B cell (primary cell): ENCODE measurements at regions of chr19 and their contacts with region 1.

Region 1: DNA sequence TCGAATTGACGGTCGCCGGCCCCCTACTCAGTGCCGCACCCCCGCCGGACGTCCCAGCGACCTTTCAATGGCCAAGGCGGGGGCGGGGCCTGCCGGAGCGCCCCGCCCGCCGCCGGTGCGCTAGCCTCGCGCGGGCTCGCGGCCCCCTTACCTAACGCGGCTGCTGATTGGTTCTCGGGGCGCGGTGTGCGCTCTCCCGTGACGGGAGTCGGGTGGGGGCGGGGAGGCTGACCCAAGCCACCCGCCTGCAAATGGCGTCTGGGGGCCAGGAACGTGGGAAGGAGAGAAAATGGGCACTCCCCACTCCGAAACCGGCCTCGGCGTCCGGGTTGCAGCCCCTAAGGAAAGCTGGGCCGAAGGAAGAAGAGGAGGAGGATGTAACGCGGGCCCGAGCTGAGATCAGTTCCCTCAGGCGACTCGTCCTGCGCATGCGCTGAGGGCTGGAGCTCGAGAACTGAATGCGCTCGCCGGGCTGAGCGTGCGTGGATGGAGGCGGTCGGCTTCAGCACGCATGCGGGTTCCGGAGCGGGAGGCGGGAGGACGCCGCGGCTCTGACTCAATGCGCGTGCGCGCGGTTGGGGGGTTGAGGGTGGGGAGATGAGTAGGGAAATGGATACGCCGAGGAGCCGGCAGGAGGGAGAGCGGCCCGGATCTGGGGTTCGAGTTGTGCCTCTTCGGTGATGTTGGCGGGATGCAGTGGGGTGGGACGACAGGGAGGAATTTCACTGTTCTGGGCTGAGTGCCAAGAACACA is at the start of gene SMG9:
- DNase-seq: peak; percentile 99
- ATAC-seq: peak; percentile 81
- H3K4me3 ChIP-seq: peak within 1 kb of the TSS; percentile 63 to 88 (median 84)
- H3K4me3 Mint-ChIP-seq: peak within 1 kb of the TSS; percentile 99
- H3K27ac ChIP-seq: peak within 1 kb of the TSS; percentile 93 to 98
- H3K27ac Mint-ChIP-seq: peak within 1 kb of the TSS; percentile 100
- H3K4me1 ChIP-seq: peaks cover 27 to 58% of the 10 kb centered on the region in 2 donors
- H3K4me1 Mint-ChIP-seq: peaks cover 71% of the 10 kb centered on the region
- H3K27me3 ChIP-seq: no peaks in the 10 kb centered on the region
- H3K27me3 Mint-ChIP-seq: no peaks in the 10 kb centered on the region
- CTCF ChIP-seq: no peak
- total RNA-seq, gene SMG9: 87.5 and 89.9 TPM in 2 replicates

Region 2: DNA sequence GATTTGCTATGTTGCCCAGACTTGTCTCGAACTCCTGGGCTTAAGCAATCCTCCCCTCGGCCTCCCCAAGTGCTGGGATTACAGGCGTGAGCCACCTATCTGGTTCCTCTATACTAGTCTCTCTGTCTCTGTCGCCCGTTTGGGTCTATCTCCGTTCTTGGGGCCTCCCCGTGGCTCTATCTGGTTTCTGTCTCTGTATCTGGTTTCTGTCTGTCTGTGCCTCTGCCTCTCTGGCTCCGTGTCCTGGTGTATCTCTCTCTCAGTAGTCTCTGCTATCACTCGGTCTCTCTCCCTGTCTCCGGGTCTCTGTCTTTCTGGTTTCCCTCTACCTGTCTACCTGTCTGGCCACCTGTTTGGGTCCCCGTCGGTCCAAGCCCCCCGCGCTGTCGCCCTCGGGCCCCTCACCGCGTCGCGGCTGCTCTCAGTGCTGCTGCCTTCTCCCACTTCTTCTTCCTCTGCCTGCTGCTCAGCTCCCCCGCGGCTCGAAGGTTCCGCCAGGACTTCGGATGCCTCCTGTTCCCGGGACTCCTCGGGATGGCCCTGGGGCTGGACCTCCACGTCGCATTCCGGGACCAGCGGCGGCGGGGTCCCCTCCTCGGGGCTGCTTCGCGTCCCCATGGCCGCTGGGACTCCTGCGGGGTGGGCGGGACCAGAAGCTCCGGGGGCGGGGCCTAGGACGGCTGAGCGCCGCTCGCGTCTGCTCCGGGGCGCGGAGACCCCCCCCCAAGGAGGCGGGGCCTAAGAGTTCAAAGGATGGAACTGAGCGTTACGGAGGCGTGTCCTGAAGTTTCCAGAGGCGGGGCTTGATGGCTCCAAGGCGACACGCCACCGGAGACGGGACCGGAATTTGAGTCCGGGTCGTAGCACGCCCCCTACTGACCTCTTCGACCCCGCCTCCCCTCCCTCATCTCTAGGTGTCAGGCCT is 250.9 kb before region 1 on chr19:
- CTCF ChIA-PET with region 1: no interaction called
- POLR2A ChIA-PET with region 1: no interaction called
- intact Hi-C with region 1: loop called (anchors 1 kb)
- DNase-seq: peak; percentile 97
- ATAC-seq: peak; percentile 95
- H3K4me3 ChIP-seq: peak overlapping the region; percentile 65 to 97 (median 76)
- H3K4me3 Mint-ChIP-seq: peak overlapping the region; percentile 95
- H3K27ac ChIP-seq: peak overlapping the region; percentile 80 to 82
- H3K27ac Mint-ChIP-seq: peak overlapping the region; percentile 98
- H3K4me1 ChIP-seq: peaks cover 12 to 22% of the 10 kb centered on the region in 2 donors
- H3K4me1 Mint-ChIP-seq: peaks cover 23% of the 10 kb centered on the region
- H3K27me3 ChIP-seq: no peaks in the 10 kb centered on the region
- H3K27me3 Mint-ChIP-seq: no peaks in the 10 kb centered on the region
- CTCF ChIP-seq: no peak

Region 3: DNA sequence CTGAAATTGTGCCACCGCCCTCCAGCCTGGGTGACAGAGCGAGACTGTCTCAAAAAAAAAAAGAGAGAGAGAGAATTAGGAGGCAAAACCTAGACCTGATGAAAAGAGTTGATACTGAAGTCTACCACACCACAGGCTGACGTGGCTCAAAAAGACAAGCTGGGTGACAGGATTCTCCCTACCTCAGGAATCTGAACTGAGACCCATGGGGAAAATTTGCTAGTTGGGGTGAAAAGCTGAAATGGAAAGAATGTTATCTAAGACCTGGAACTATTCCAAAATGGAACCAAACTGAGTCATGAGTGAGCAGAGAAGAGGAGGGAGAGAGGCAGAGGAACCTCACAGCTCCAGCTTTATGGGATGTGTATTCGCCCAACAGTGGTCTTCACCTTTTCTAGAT is 11.7 kb before region 1 on chr19:
- CTCF ChIA-PET with region 1: interaction called, 61 read pairs
- POLR2A ChIA-PET with region 1: interaction called, 9 read pairs
- intact Hi-C with region 1: no loop called
- DNase-seq: no peak
- ATAC-seq: no peak
- H3K4me3 ChIP-seq: no peak overlapping the region
- H3K4me3 Mint-ChIP-seq: no peak overlapping the region
- H3K27ac ChIP-seq: no peak overlapping the region
- H3K27ac Mint-ChIP-seq: no peak overlapping the region
- H3K4me1 ChIP-seq: peaks cover 9 to 20% of the 10 kb centered on the region in 2 donors
- H3K4me1 Mint-ChIP-seq: peaks cover 21% of the 10 kb centered on the region
- H3K27me3 ChIP-seq: no peaks in the 10 kb centered on the region
- H3K27me3 Mint-ChIP-seq: no peaks in the 10 kb centered on the region
- CTCF ChIP-seq: no peak

Region 4: DNA sequence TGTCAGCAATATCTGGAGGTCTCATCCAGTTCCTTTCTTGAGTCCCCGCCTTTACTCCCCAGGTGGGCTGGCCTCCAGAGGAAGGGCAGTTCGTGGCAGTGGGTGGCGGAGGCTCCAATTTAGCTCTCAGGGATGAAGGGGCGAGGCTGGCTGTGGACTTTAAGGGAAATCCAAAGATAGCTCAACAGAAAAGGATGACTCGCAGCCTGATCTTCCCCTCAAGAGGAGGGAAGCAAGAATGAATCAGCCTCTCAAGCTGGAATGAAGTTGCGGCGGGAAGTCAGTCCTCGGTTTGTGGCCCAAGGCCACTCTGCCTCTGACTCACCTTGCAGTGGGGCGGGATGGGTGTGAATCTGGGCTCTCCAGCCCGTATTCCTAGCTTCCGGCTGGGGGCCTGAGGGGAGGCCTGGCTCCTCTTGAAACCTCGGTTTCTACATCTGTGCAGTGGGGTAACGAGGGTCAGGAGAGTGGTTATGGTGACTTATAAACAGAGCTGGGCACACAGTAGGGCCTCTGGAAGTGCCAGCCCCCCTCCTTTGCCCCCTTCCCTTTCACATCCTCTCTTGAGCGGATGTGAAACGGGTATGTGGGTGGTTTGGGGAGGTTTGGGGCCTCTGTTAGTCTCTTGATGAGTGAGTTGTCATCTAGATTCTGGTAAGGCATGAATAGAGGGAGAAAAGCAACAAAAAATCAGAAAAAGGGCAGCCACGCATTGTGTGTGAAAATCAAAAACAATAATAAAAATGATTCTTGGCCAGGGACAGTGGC is 10.6 kb after region 1 on chr19:
- CTCF ChIA-PET with region 1: interaction called, 64 read pairs
- POLR2A ChIA-PET with region 1: interaction called, 45 read pairs
- intact Hi-C with region 1: loop called (anchors 1 kb)
- DNase-seq: peak; percentile 82
- ATAC-seq: peak; percentile 86
- H3K4me3 ChIP-seq: peak overlapping the region in 2 of 5 experiments; percentile 23 to 34
- H3K4me3 Mint-ChIP-seq: peak overlapping the region; percentile 72
- H3K27ac ChIP-seq: peak overlapping the region; percentile 88 to 92
- H3K27ac Mint-ChIP-seq: peak overlapping the region; percentile 87
- H3K4me1 ChIP-seq: peaks cover 42 to 57% of the 10 kb centered on the region in 2 donors
- H3K4me1 Mint-ChIP-seq: peaks cover 61% of the 10 kb centered on the region
- H3K27me3 ChIP-seq: no peaks in the 10 kb centered on the region
- H3K27me3 Mint-ChIP-seq: no peaks in the 10 kb centered on the region
- CTCF ChIP-seq: no peak

Region 5: GRCh38 chr19:43774103-43774939 is 19.6 kb after region 1 on chr19:
- CTCF ChIA-PET with region 1: interaction called, 237 read pairs
- POLR2A ChIA-PET with region 1: interaction called, 89 read pairs
- intact Hi-C with region 1: no loop called
- DNase-seq: no peak
- ATAC-seq: no peak
- H3K4me3 ChIP-seq: no peak overlapping the region
- H3K4me3 Mint-ChIP-seq: no peak overlapping the region
- H3K27ac ChIP-seq: no peak overlapping the region
- H3K27ac Mint-ChIP-seq: no peak overlapping the region
- H3K4me1 ChIP-seq: peaks cover 31 to 52% of the 10 kb centered on the region in 2 donors
- H3K4me1 Mint-ChIP-seq: peaks cover 53% of the 10 kb centered on the region
- H3K27me3 ChIP-seq: no peaks in the 10 kb centered on the region
- H3K27me3 Mint-ChIP-seq: no peaks in the 10 kb centered on the region
- CTCF ChIP-seq: no peak